ENCODE measurements at regions of chr11 and their contacts with region 1.

Region 1: GRCh38 chr11:125514336-125515101 is 18.5 kb upstream of the FEZ1 start:
- DNase-seq: peak; percentile 85
- H3K4me3 Mint-ChIP-seq: peak overlapping the region; percentile 29
- H3K27ac Mint-ChIP-seq: peak overlapping the region; percentile 88
- H3K4me1 Mint-ChIP-seq: peaks cover 36% of the 10 kb centered on the region
- H3K27me3 Mint-ChIP-seq: no peaks in the 10 kb centered on the region

Region 2: GRCh38 chr11:125390946-125391345 is 123.6 kb before region 1 on chr11:
- intact Hi-C with region 1: no loop called
- DNase-seq: no peak
- H3K4me3 Mint-ChIP-seq: no peak overlapping the region
- H3K27ac Mint-ChIP-seq: no peak overlapping the region
- H3K4me1 Mint-ChIP-seq: no peaks in the 10 kb centered on the region
- H3K27me3 Mint-ChIP-seq: peaks cover 19% of the 10 kb centered on the region

Region 3: GRCh38 chr11:125568970-125569914 is 54.7 kb after region 1 on chr11 and contains the start of gene EI24:
- intact Hi-C with region 1: loop called (anchors 1 kb)
- DNase-seq: peak; percentile 97
- H3K4me3 Mint-ChIP-seq: peak within 1 kb of the TSS; percentile 96
- H3K27ac Mint-ChIP-seq: peak within 1 kb of the TSS; percentile 94
- H3K4me1 Mint-ChIP-seq: peaks cover 18% of the 10 kb centered on the region
- H3K27me3 Mint-ChIP-seq: no peaks in the 10 kb centered on the region
- total RNA-seq, gene EI24: 61.7 TPM in 2 replicates

Measured in activated CD4-positive, alpha-beta T cell treated with anti-CD3 and anti-CD28 coated beads, Interleukin-2, amount 10 ng/mL, durations not matched to agents 24 days and 14 days (primary cell).